HEK293 (cell line): ENCODE measurements at regions of chrX and their contacts with region 1.

Region 1: DNA sequence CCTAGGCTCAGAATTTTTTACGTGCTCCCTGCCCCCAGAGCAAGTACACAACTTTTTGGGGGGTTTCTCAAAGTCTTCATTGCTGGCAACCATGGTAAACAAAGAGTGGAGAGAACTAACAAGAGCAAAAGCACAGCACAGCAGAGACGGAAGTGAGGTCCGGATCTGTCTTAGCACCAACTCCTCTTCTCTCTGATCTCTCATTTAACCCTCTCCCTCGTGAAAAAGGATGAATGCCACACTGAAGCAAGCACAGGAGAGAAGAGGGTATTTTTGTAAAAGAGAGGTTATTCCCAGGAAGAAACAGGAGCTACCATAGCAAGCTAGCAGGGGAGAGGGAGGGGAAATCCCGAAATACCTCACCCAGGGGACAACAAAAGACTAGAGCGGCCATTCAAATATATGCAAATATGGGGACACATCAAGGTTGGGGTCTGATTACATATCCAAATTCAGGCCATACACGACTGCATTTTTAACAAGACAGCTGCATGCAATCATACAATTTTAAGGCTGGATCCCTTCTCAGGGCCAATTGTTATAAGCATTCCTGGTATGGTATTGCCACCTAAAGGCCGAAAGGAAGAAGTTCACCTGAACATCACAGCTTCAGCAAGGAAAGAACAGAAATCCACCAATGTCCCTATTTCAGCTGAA is 46.6 kb downstream of the CD40LG start:
- H3K4me3 ChIP-seq: no peak overlapping the region
- H3K27ac ChIP-seq: no peak overlapping the region
- H3K4me1 ChIP-seq: no peaks in the 10 kb centered on the region
- CTCF ChIP-seq: peak; percentile 62; the same call in 1 of the 2 replicates

Region 2: GRCh38 chrX:136577552-136577951 is 117.0 kb before region 1 on chrX:
- CTCF ChIA-PET with region 1: interaction called, 15 read pairs
- POLR2A ChIA-PET with region 1: interaction called, 3 read pairs
- H3K4me3 ChIP-seq: no peak overlapping the region
- H3K27ac ChIP-seq: no peak overlapping the region
- H3K4me1 ChIP-seq: peaks cover 8% of the 10 kb centered on the region; the same call in 1 of the 2 replicates
- CTCF ChIP-seq: peak; percentile 66; the same call in 1 of the 2 replicates

Region 3: DNA sequence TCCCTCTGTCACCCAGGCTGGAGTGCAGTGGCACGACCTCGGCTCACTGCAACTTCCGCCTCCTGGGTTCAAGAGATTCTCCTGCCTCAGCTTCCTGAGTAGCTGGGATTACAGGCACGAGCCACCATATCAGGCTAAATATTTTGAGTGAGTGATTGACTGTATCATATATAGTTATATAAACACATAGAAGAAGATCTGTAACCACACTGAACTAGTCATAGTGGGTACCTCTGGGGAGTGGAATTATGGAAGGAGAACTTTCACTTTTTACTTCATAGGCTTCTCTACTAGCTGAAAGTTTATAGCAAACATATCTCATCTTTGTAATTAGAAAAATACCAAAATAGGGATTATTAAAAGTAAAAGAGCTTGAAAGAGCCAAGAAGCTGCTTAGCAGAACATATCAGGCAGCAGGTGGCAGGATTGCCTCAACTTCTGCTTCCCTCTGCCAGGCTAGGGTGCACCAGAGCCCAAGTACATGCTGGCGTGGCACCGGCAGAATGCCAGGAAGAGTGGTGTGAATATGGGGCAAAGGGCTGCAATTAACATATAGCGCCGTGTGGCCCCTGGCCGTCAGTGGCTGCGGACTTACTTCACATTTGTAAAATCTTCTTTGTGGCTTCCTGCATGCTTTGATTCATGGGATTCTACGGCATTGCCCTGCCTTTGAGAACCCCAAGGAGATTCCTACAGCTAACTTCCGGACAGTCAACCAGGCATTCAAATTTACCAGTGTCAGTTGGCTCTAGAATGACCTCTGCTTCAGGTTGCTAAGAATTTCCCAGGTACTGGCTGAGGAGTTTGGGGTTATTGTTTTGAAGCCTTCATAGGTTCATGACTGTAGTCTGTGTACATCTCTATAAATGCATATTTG is 86.0 kb before region 1 on chrX:
- CTCF ChIA-PET with region 1: interaction called, 21 read pairs
- POLR2A ChIA-PET with region 1: no interaction called
- H3K4me3 ChIP-seq: no peak overlapping the region
- H3K27ac ChIP-seq: no peak overlapping the region
- H3K4me1 ChIP-seq: no peaks in the 10 kb centered on the region
- CTCF ChIP-seq: no peak

Region 4: GRCh38 chrX:136708348-136708747 is 13.8 kb after region 1 on chrX:
- CTCF ChIA-PET with region 1: interaction called, 23 read pairs
- POLR2A ChIA-PET with region 1: no interaction called
- H3K4me3 ChIP-seq: no peak overlapping the region
- H3K27ac ChIP-seq: no peak overlapping the region
- H3K4me1 ChIP-seq: no peaks in the 10 kb centered on the region
- CTCF ChIP-seq: no peak